CD8-positive, alpha-beta memory T cell (primary cell): ENCODE measurements at regions of chr10 and their contacts with region 1.

Region 1: GRCh38 chr10:104308439-104308903 is 29.8 kb downstream of the ITPRIP start:
- DNase-seq: peak in 2 of 5 donors; percentile 54 to 77
- H3K4me3 ChIP-seq: peak overlapping the region; percentile 5
- H3K4me3 Mint-ChIP-seq: peak overlapping the region; percentile 57 to 72 (median 65)
- H3K27ac ChIP-seq: no peak overlapping the region
- H3K27ac Mint-ChIP-seq: peak overlapping the region; percentile 39 to 79 (median 74)
- H3K4me1 ChIP-seq: peaks cover 71% of the 10 kb centered on the region
- H3K4me1 Mint-ChIP-seq: peaks cover 62 to 79% (median 74%) of the 10 kb centered on the region in 3 donors
- H3K27me3 ChIP-seq: no peaks in the 10 kb centered on the region
- H3K27me3 Mint-ChIP-seq: peaks cover 0 to 1% of the 10 kb centered on the region in 2 donors

Region 2: DNA sequence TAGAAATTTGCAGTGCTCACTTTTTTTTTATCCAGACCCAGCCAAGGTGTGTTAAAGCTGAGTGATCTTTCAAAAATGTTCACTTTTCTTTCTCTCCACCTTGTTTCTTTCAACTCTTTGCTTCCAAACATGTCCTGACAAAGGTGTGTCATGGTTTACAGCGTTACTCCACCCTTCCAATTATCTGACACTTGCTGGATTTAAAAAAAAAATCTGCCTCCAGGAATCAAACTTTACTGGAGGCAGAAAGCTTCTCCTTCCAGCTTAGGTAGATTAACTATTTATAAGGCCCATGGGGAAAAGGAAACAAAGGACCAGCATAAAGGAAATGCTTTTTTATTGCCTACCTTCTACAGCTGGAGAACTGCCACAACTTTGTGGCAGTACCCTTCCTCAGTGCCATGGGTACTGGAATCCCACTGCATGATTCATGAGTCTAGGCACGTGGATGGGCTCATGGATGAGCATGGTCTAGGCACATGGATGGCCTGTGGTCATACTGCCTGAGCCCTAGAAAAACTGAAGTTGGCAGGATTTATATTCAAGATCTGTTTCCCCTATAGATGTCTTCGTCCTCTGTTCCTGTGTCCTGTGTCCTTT is 222.6 kb before region 1 on chr10 and contains the start of gene COL17A1:
- CTCF ChIA-PET with region 1: no interaction called
- POLR2A ChIA-PET with region 1: no interaction called
- DNase-seq: no peak
- H3K4me3 ChIP-seq: no peak within 1 kb of the TSS
- H3K4me3 Mint-ChIP-seq: no peak within 1 kb of the TSS
- H3K27ac ChIP-seq: no peak within 1 kb of the TSS
- H3K27ac Mint-ChIP-seq: peak within 1 kb of the TSS in 2 of 8 donors; percentile 7 to 52
- H3K4me1 ChIP-seq: no peaks in the 10 kb centered on the region
- H3K4me1 Mint-ChIP-seq: no peaks in the 10 kb centered on the region
- H3K27me3 ChIP-seq: no peaks in the 10 kb centered on the region
- H3K27me3 Mint-ChIP-seq: peaks cover 0 to 7% of the 10 kb centered on the region in 2 donors
- total RNA-seq, gene COL17A1: not detected

Region 3: DNA sequence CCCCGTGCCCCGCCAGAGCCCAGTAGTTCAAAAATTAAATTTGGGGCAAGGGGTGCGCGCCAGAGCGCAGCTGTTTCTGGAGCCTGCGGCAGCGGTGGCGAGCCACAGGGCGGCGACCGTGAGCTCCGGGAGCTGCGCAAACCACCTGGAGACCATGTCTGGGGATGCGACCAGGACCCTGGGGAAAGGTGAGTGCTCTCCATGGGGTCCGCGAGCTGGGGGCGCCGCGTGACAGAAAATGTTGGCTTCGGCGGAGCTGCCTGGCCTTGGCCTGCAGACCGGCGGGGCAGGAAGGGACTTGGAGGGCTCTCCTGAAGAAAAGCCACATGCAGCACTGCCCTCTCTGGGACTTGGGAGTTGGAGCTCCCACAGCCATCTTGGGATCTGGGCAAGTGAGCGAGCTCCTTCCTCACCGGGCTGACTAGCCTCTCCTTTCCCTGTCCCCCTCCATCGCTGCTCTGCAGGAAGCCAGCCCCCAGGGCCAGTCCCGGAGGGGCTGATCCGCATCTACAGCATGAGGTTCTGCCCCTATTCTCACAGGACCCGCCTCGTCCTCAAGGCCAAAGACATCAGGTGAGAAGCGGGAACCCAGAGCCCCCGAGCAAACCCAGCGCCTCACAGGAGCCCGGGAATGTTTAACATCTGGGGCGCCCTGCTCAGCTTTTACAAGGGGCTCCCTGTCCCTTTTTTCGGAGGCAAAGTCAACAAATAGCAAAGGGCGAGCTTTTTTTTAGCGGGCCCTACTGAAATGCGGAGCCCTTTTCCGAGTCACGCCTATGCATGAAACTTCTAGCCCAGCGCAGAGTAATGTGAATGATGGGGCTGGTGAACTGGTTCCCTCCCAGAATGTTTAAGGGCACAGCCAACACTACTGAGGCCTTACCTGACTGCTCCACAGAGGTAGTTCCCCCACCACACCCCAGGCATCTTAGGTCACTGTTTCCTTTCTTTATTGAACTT is 33.4 kb before region 1 on chr10:
- CTCF ChIA-PET with region 1: interaction called, 14 read pairs
- POLR2A ChIA-PET with region 1: no interaction called
- DNase-seq: peak in 4 of 5 donors; percentile 18 to 51 (median 35)
- H3K4me3 ChIP-seq: no peak overlapping the region
- H3K4me3 Mint-ChIP-seq: peak overlapping the region in 3 of 7 donors; percentile 15 to 52 (median 20)
- H3K27ac ChIP-seq: no peak overlapping the region
- H3K27ac Mint-ChIP-seq: no peak overlapping the region
- H3K4me1 ChIP-seq: peaks cover 3% of the 10 kb centered on the region
- H3K4me1 Mint-ChIP-seq: peaks cover 0 to 6% (median 0%) of the 10 kb centered on the region in 3 donors
- H3K27me3 ChIP-seq: no peaks in the 10 kb centered on the region
- H3K27me3 Mint-ChIP-seq: peaks cover 8 to 35% of the 10 kb centered on the region in 2 donors

Region 4: DNA sequence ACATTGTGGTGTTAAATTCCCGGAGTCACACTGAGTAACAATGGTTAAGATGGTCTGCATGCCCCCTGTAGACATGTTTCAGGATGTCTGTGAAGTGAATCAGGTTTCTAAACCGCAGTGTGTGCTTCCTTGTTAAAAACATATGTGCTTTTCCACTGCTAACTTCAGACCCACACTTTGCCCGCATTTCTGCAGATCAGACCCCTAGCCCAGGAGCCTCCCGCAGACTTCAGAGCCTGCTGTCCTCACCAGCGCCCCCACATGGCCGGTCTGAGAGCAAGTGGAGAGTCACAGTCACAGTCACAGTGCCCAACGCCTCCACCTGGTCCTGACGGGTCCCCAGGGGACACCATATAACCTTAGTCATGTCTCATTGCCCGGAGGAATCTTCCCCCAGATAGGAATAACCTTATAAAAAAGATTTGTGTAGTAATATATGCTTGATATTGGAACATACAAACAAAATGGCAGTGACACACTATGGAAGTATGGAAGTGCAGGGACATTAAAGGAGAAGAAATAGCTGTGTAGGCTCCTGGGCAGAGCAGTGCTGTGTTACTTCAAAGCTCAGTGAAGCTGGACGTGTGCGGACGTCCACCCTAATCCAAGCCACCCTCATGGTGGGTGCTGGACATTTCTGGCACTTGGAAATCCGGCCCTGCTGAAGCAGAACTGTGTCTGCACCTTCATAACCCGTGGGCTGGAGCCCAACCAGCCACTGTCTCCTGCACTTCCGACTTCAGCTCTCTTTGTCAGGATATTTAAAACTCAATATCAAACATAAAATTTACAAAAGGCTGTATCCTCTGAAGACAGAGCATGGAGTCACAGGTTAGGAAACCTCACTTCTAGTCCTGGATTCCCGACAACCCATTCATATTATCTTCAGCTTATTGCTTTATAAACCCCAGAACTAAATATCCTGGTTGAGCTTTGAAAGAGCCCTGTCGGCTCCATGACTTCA is 10.5 kb before region 1 on chr10:
- CTCF ChIA-PET with region 1: interaction called, 60 read pairs
- POLR2A ChIA-PET with region 1: no interaction called
- DNase-seq: peak in 1 of 5 donors; percentile 23
- H3K4me3 ChIP-seq: no peak overlapping the region
- H3K4me3 Mint-ChIP-seq: no peak overlapping the region
- H3K27ac ChIP-seq: no peak overlapping the region
- H3K27ac Mint-ChIP-seq: no peak overlapping the region
- H3K4me1 ChIP-seq: peaks cover 12% of the 10 kb centered on the region
- H3K4me1 Mint-ChIP-seq: peaks cover 19 to 24% (median 21%) of the 10 kb centered on the region in 3 donors
- H3K27me3 ChIP-seq: no peaks in the 10 kb centered on the region
- H3K27me3 Mint-ChIP-seq: peaks cover 2 to 12% of the 10 kb centered on the region in 2 donors

Region 5: GRCh38 chr10:104328896-104329710 is 20.6 kb after region 1 on chr10:
- CTCF ChIA-PET with region 1: interaction called, 81 read pairs
- POLR2A ChIA-PET with region 1: no interaction called
- DNase-seq: peak; percentile 67 to 90 (median 78)
- H3K4me3 ChIP-seq: peak overlapping the region; percentile 49
- H3K4me3 Mint-ChIP-seq: peak overlapping the region; percentile 72 to 92 (median 79)
- H3K27ac ChIP-seq: peak overlapping the region; percentile 68
- H3K27ac Mint-ChIP-seq: peak overlapping the region; percentile 89 to 100 (median 97)
- H3K4me1 ChIP-seq: peaks cover 100% of the 10 kb centered on the region
- H3K4me1 Mint-ChIP-seq: peaks cover 90 to 100% (median 99%) of the 10 kb centered on the region in 3 donors
- H3K27me3 ChIP-seq: no peaks in the 10 kb centered on the region
- H3K27me3 Mint-ChIP-seq: peaks cover 0 to 11% of the 10 kb centered on the region in 2 donors

Region 6: GRCh38 chr10:104353325-104354048 is 45.0 kb after region 1 on chr10 and contains the start of gene CFAP58:
- CTCF ChIA-PET with region 1: interaction called, 160 read pairs
- POLR2A ChIA-PET with region 1: interaction called, 7 read pairs
- DNase-seq: peak; percentile 87 to 93 (median 88)
- H3K4me3 ChIP-seq: peak within 1 kb of the TSS; percentile 67
- H3K4me3 Mint-ChIP-seq: peak within 1 kb of the TSS in 2 of 7 donors; percentile 75 to 81
- H3K27ac ChIP-seq: no peak within 1 kb of the TSS
- H3K27ac Mint-ChIP-seq: peak within 1 kb of the TSS in 5 of 8 donors; percentile 13 to 87 (median 84)
- H3K4me1 ChIP-seq: peaks cover 20% of the 10 kb centered on the region
- H3K4me1 Mint-ChIP-seq: peaks cover 0 to 20% (median 0%) of the 10 kb centered on the region in 3 donors
- H3K27me3 ChIP-seq: no peaks in the 10 kb centered on the region
- H3K27me3 Mint-ChIP-seq: no peaks in the 10 kb centered on the region
- total RNA-seq, gene CFAP58: 0.07 TPM in 1 of 2 experiments, not detected in the other